Activated CD4-positive, alpha-beta T cell treated with anti-CD3 and anti-CD28 coated beads, Interleukin-2, amount 10 ng/mL, durations not matched to agents 7 days and 5 days (primary cell): ENCODE measurements at regions of chr2 and their contacts with region 1.

Region 1: GRCh38 chr2:25810428-25810827 is 67.9 kb downstream of the ASXL2 start:
- DNase-seq: no peak
- H3K4me3 Mint-ChIP-seq: no peak overlapping the region
- H3K27ac Mint-ChIP-seq: no peak overlapping the region
- H3K4me1 Mint-ChIP-seq: peaks cover 51% of the 10 kb centered on the region
- H3K27me3 Mint-ChIP-seq: no peaks in the 10 kb centered on the region

Region 2: DNA sequence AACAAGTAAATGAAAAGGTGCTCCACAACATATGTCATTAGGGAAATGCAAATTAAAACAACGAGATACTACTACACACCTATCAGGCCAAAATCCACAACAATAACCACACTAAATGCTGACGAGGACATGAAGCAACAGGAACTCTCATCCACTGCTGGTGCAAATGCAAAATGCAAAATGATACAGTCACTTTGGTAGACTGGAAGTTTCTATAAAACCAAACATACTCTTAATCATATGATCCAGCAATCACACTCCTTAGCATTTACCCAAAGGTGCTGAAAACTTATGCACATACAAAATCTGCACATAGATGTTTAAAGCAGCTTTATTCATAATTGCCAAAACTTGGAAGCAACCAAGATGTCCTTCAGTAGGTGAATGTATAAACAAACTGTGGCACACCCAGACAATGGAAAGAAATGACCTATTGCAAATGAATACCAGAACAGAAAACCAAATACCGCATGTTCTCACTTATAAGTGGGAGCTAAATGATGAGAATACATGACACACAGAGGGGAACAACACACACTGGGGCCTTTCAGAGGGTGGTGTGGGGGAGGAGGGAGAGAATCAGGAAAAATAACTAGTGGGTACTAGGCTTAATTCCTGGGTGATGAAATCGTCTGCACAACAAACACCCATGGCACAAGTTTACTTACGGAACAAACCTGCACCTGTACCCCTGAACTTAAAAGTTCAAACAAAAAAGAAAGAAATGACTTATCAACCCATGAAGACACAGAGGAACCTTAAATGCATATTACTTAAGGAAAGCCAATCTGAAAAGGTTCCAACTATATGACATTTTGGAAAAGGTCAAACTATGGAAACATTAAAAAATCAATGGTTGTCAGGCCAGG is 12.6 kb before region 1 on chr2:
- CTCF ChIA-PET with region 1: interaction called, 10 read pairs
- POLR2A ChIA-PET with region 1: no interaction called
- DNase-seq: no peak
- H3K4me3 Mint-ChIP-seq: no peak overlapping the region
- H3K27ac Mint-ChIP-seq: peak overlapping the region; percentile 51
- H3K4me1 Mint-ChIP-seq: peaks cover 61% of the 10 kb centered on the region
- H3K27me3 Mint-ChIP-seq: no peaks in the 10 kb centered on the region